ENCODE measurements at regions of chr13 and their contacts with region 1.

Region 1: DNA sequence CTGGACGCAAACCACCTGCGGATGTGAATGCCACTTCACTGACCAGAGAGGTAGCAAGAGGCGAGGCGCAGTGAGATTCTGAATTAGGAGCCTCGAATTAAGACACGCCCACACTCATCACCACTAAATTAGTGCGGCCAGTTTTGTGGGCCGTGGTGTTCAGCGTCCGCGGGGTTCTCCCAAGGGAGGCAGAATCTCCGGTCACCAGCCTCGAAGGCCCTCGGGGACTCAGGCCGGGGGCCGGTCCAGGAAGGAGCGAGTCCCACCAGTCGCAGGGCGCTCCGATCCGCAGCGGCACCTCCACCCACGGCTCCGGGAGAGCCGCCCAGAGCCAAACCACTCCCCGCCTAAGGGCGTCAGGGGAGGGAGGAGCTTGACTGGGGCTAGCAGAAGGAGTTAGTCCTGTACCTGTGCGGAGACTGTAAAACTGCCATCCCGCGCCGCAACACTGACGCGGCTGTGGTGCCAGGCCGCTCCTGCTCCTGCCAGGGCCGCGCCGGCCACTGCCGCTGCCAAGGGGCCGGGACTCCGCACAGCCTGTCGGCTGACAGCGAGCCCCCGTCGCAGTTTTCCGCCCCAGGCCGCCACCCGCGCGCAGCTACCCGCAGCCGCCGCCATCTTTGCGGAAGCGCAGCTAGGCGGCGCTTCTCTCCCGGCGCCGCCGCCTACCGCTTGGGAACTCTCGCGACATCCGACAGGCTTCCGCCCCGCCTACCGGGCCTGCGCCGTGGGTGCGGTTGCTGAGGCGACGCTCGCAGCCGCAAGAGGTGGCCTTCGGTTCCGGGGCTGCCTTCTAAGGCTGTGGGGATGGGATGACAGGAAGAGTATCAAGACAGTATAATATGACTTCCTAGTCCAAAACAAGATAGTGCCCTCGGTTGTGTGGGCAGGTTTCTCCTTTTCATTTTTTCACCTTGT is at the start of gene MICU2:
- DNase-seq: peak; percentile 81

Region 2: GRCh38 chr13:21616880-21617279 is 13.1 kb after region 1 on chr13:
- CTCF ChIA-PET with region 1: no interaction called
- POLR2A ChIA-PET with region 1: interaction called, 11 read pairs
- DNase-seq: no peak